Endothelial cell of umbilical vein (primary cell): ENCODE measurements at regions of chr1 and their contacts with region 1.

Region 1: GRCh38 chr1:11805447-11806306 is at the starts of genes CLCN6 and MTHFR:
- DNase-seq: peak; percentile 100
- H3K4me3 ChIP-seq: peak within 1 kb of the TSS; percentile 75 to 97 (median 93)
- H3K27ac ChIP-seq: peak within 1 kb of the TSS; percentile 85
- H3K4me1 ChIP-seq: peaks cover 51% of the 10 kb centered on the region
- H3K27me3 ChIP-seq: no peaks in the 10 kb centered on the region
- CTCF ChIP-seq: no peak
- POLR2A ChIP-seq: peak; percentile 58
- total RNA-seq, gene CLCN6: 41.2 and 43.3 TPM in 2 replicates
- total RNA-seq, gene MTHFR: 25.3 and 26.5 TPM in 2 replicates

Region 2: GRCh38 chr1:11822096-11822495 is 16.4 kb after region 1 on chr1:
- CTCF ChIA-PET with region 1: interaction called, 5 read pairs
- POLR2A ChIA-PET with region 1: no interaction called
- dilution Hi-C with region 1: no loop called
- intact Hi-C with region 1: loop called (anchors 1 kb)
- DNase-seq: no peak
- H3K4me3 ChIP-seq: no peak overlapping the region
- H3K27ac ChIP-seq: peak overlapping the region; percentile 79
- H3K4me1 ChIP-seq: peaks cover 17% of the 10 kb centered on the region
- H3K27me3 ChIP-seq: no peaks in the 10 kb centered on the region
- CTCF ChIP-seq: no peak
- POLR2A ChIP-seq: no peak